T-cell (primary cell): ENCODE measurements at regions of chr15 and their contacts with region 1.

Region 1: GRCh38 chr15:81653259-81653658 is 279.2 kb upstream of the TMC3 start:
- DNase-seq: no peak
- ATAC-seq: no peak
- H3K4me3 ChIP-seq: no peak overlapping the region
- H3K4me3 Mint-ChIP-seq: no peak overlapping the region
- H3K27ac ChIP-seq: no peak overlapping the region
- H3K27ac Mint-ChIP-seq: no peak overlapping the region
- H3K4me1 ChIP-seq: no peaks in the 10 kb centered on the region
- H3K4me1 Mint-ChIP-seq: no peaks in the 10 kb centered on the region
- H3K27me3 ChIP-seq: peaks cover 0 to 12% of the 10 kb centered on the region in 2 experiments
- H3K27me3 Mint-ChIP-seq: peaks cover 4 to 5% of the 10 kb centered on the region in 2 donors

Region 2: GRCh38 chr15:81516461-81516860 is 136.8 kb before region 1 on chr15:
- CTCF ChIA-PET with region 1: no interaction called
- POLR2A ChIA-PET with region 1: no interaction called
- DNase-seq: no peak
- ATAC-seq: no peak
- H3K4me3 ChIP-seq: no peak overlapping the region
- H3K4me3 Mint-ChIP-seq: no peak overlapping the region
- H3K27ac ChIP-seq: no peak overlapping the region
- H3K27ac Mint-ChIP-seq: no peak overlapping the region
- H3K4me1 ChIP-seq: no peaks in the 10 kb centered on the region
- H3K4me1 Mint-ChIP-seq: no peaks in the 10 kb centered on the region
- H3K27me3 ChIP-seq: no peaks in the 10 kb centered on the region
- H3K27me3 Mint-ChIP-seq: peaks cover 5 to 17% of the 10 kb centered on the region in 2 donors

Region 3: GRCh38 chr15:81642451-81642990 is 10.7 kb before region 1 on chr15:
- CTCF ChIA-PET with region 1: interaction called in 1 of 2 experiments, 14 read pairs
- POLR2A ChIA-PET with region 1: no interaction called
- DNase-seq: no peak
- ATAC-seq: no peak
- H3K4me3 ChIP-seq: no peak overlapping the region
- H3K4me3 Mint-ChIP-seq: no peak overlapping the region
- H3K27ac ChIP-seq: no peak overlapping the region
- H3K27ac Mint-ChIP-seq: no peak overlapping the region
- H3K4me1 ChIP-seq: no peaks in the 10 kb centered on the region
- H3K4me1 Mint-ChIP-seq: no peaks in the 10 kb centered on the region
- H3K27me3 ChIP-seq: peaks cover 0 to 2% of the 10 kb centered on the region in 2 experiments
- H3K27me3 Mint-ChIP-seq: peaks cover 5 to 10% of the 10 kb centered on the region in 2 donors

Region 4: GRCh38 chr15:81723701-81724100 is 70.4 kb after region 1 on chr15:
- CTCF ChIA-PET with region 1: no interaction called
- POLR2A ChIA-PET with region 1: no interaction called
- DNase-seq: no peak
- ATAC-seq: no peak
- H3K4me3 ChIP-seq: no peak overlapping the region
- H3K4me3 Mint-ChIP-seq: no peak overlapping the region
- H3K27ac ChIP-seq: no peak overlapping the region
- H3K27ac Mint-ChIP-seq: no peak overlapping the region
- H3K4me1 ChIP-seq: no peaks in the 10 kb centered on the region
- H3K4me1 Mint-ChIP-seq: no peaks in the 10 kb centered on the region
- H3K27me3 ChIP-seq: no peaks in the 10 kb centered on the region
- H3K27me3 Mint-ChIP-seq: peaks cover 3 to 26% of the 10 kb centered on the region in 2 donors